ENCODE measurements at regions of chr9 and their contacts with region 1.

Region 1: DNA sequence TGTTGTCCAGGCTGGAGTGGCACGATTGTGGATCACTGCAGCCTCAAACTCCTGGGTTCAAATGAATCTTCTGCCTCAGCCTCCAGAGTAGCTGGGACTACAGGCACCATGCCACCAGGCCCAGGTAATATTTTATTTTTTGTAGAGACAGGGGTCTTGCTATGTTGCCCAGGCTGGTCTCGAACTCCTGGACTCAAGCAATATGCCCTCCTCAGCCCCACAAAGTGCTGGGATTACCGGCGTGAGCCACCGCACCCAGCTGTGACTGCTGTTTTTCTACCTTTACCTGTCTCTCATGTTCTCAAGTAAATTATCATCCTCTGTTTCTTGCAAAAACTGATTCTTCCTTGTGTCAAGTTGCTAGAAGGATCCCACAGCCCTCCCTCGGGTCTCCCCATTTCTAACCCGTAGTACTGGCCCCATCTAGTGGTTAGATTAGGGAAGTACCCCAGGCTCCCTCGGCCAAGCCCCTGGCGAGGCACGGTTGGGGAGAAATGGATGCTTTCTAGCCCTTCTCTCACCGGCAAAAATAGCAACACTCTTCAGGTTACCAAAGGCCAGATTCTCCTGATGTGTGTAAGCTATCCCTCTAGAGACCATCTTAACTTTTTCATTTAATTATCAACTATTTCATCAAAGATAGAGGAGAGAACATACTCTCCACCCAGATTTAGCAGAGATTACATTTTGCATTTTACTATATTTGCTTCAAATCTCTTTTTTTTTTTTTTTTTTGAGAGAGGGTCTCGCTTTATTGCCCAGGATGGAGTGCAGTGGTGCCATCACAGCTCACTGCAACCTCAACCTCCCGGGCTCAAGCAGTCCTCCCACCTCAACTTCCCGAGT is 19.2 kb upstream of the TOR1B start:
- DNase-seq: peak; percentile 66 to 82 (median 69)
- ATAC-seq: peak; percentile 88 to 91
- H3K4me3 ChIP-seq: no peak overlapping the region
- H3K27ac ChIP-seq: no peak overlapping the region
- H3K4me1 ChIP-seq: no peaks in the 10 kb centered on the region
- H3K27me3 ChIP-seq: no peaks in the 10 kb centered on the region

Region 2: DNA sequence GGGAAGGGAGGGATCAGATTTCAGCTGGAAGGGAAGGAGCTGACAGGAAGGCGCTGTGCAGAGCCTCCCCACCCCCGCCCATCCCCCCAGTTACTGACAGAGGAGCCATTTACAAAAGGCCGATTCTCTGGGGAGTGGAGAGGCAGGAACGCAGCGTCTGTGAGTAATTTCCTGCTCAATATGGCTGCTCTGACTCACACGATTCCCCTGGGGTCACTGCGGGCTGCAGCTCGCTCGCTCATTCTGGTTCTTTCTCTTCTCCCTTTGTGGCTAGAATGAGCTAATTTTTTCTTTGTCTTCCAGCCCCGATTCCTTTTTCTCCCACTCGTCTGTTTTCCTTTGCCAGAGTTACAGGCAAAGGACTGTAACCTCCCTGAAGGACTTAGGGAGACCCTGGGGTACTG is 643.7 kb before region 1 on chr9:
- intact Hi-C with region 1: loop called (anchors 10 kb)
- DNase-seq: peak; percentile 94 to 96 (median 95)
- ATAC-seq: peak; percentile 79 to 81
- H3K4me3 ChIP-seq: peak overlapping the region; percentile 3
- H3K27ac ChIP-seq: peak overlapping the region; percentile 96
- H3K4me1 ChIP-seq: peaks cover 26% of the 10 kb centered on the region
- H3K27me3 ChIP-seq: no peaks in the 10 kb centered on the region

Region 3: DNA sequence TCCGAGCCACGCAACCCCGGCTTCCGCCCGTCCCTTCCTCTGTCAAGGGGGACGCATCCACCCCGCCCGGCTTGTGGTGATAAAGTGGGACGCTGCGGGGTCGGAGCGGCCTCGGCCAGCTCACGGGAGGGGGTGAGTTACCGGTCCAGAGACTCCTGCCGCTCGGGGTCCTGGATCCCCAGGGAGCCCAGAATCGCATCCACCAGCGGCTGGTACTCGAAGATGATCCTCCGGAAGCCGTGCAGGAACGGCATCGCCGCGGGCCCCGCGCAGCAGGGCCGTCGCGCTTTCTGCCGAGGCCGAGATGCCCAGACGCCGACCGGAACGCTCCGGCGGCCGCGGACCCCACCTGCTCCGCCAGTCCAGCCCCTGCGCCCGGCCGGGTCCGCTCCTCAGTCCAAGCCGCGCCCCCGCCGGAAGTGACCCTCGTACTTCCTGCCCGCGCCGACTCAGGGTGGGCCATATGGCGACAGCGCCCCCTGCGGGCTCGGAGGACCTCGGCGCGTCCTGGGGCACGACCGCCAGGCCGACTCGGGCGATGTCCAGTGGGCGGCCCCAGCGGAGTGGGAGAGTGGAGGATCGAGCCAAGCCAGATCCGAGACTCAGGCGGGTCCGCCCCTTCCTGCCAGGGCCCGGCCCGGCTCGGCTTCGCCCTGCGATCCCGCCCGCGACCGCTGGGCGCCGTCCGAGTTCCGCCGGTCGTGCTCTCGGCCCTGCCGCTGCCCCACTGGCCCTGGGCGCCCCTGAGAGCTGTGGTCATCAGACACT is 141.8 kb before region 1 on chr9 and contains the start of gene ASB6:
- intact Hi-C with region 1: loop called (anchors 5 to 10 kb)
- DNase-seq: peak; percentile 98 to 99 (median 99)
- ATAC-seq: peak; percentile 97
- H3K4me3 ChIP-seq: peak within 1 kb of the TSS; percentile 68
- H3K27ac ChIP-seq: peak within 1 kb of the TSS; percentile 65
- H3K4me1 ChIP-seq: peaks cover 6% of the 10 kb centered on the region
- H3K27me3 ChIP-seq: no peaks in the 10 kb centered on the region
- total RNA-seq, gene ASB6: 9.1 to 10.7 (median 10.2) TPM

Region 4: GRCh38 chr9:129737479-129738274 is 46.1 kb before region 1 on chr9:
- intact Hi-C with region 1: loop called (anchors 2 to 5 kb)
- DNase-seq: peak; percentile 83 to 94 (median 93)
- ATAC-seq: peak; percentile 92 to 93
- H3K4me3 ChIP-seq: peak overlapping the region; percentile 67
- H3K27ac ChIP-seq: no peak overlapping the region
- H3K4me1 ChIP-seq: no peaks in the 10 kb centered on the region
- H3K27me3 ChIP-seq: no peaks in the 10 kb centered on the region

Region 5: DNA sequence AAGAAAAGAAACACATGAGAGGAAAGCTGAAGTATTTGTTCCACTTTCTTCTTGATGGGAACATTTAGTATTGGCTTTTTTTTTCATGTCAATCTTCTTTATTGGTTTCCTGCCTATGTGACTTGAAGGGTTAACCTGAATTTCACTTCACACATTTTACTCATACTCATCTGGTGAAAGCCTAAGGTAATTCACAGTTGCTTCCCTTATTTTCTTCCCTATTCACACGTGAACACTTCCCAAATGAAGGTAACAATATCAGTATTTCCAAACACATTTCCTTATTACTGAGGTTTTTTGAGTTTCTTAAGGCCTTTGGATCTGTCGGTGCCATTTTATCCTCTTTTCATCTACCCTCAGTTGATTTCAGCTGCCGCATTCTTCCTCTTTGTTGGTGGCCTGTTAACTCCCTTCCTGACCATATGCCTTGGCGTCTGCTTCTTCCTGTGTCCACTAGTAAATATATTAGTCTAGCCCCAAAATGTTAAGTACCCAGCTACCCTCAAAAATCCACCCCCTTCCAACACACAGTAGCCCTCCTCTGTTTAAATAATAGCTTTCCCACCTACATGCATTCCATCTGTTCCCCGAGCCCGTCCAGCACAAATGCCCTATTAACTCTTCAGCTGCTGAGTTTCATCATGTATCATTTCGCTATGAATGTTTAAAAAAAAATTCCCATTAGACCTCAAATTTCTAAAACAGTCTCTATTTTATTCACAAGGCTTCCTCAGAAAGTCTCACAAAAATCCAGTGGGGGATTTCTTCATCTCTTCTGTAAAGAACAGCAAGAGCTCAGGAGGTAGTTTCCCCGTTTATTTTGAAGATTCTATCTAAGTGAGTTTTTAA is 148.8 kb after region 1 on chr9:
- intact Hi-C with region 1: no loop called
- DNase-seq: no peak
- ATAC-seq: peak; percentile 44 to 47
- H3K4me3 ChIP-seq: no peak overlapping the region
- H3K27ac ChIP-seq: no peak overlapping the region
- H3K4me1 ChIP-seq: peaks cover 11% of the 10 kb centered on the region
- H3K27me3 ChIP-seq: no peaks in the 10 kb centered on the region

Measured in right cardiac atrium (tissue), 5 donors.